ENCODE measurements at regions of chr10 and their contacts with region 1.

Region 1: GRCh38 chr10:72048450-72049124 is 39.8 kb downstream of the SPOCK2 start:
- DNase-seq: peak; percentile 95
- H3K4me3 Mint-ChIP-seq: no peak overlapping the region
- H3K27ac Mint-ChIP-seq: no peak overlapping the region
- H3K4me1 Mint-ChIP-seq: peaks cover 4% of the 10 kb centered on the region
- H3K27me3 Mint-ChIP-seq: no peaks in the 10 kb centered on the region

Region 2: GRCh38 chr10:71893920-71894319 is 154.7 kb before region 1 on chr10:
- CTCF ChIA-PET with region 1: interaction called, 126 read pairs
- POLR2A ChIA-PET with region 1: no interaction called
- intact Hi-C with region 1: loop called (anchors 1 kb)
- DNase-seq: no peak
- H3K4me3 Mint-ChIP-seq: no peak overlapping the region
- H3K27ac Mint-ChIP-seq: no peak overlapping the region
- H3K4me1 Mint-ChIP-seq: peaks cover 6% of the 10 kb centered on the region
- H3K27me3 Mint-ChIP-seq: peaks cover 16% of the 10 kb centered on the region

Region 3: GRCh38 chr10:71985542-71986250 is 62.9 kb before region 1 on chr10:
- CTCF ChIA-PET with region 1: interaction called, 28 read pairs
- POLR2A ChIA-PET with region 1: no interaction called
- intact Hi-C with region 1: no loop called
- DNase-seq: peak; percentile 47
- H3K4me3 Mint-ChIP-seq: peak overlapping the region; percentile 17
- H3K27ac Mint-ChIP-seq: peak overlapping the region; percentile 74
- H3K4me1 Mint-ChIP-seq: peaks cover 21% of the 10 kb centered on the region
- H3K27me3 Mint-ChIP-seq: peaks cover 7% of the 10 kb centered on the region

Region 4: DNA sequence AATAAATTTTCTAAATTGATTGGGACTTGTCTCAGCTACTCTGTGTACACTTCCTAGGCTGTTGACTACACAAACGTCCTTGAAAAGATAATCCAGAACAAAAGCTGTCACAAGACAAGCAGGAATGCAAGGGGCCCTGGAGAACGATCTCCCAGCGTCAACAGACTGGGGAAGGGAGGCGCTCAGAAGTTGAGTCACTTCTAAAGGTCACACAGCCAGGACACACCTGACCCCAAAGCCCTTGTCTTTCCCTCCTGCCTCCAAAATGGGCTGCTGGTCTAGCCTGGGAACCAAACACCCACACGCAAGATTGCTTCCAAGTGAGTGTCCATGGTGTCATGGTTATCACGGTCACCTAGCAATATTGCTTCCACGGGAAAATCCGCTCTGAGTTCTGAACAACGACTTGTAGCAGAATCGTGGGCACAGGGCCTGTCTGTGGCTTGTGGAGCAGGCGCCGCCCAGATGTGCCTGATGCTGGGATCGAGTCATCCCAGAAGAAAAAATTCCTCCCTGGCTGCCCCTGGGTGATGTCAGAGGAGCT is 10.1 kb before region 1 on chr10:
- CTCF ChIA-PET with region 1: interaction called, 19 read pairs
- POLR2A ChIA-PET with region 1: no interaction called
- intact Hi-C with region 1: no loop called
- DNase-seq: no peak
- H3K4me3 Mint-ChIP-seq: no peak overlapping the region
- H3K27ac Mint-ChIP-seq: no peak overlapping the region
- H3K4me1 Mint-ChIP-seq: no peaks in the 10 kb centered on the region
- H3K27me3 Mint-ChIP-seq: no peaks in the 10 kb centered on the region

Region 5: DNA sequence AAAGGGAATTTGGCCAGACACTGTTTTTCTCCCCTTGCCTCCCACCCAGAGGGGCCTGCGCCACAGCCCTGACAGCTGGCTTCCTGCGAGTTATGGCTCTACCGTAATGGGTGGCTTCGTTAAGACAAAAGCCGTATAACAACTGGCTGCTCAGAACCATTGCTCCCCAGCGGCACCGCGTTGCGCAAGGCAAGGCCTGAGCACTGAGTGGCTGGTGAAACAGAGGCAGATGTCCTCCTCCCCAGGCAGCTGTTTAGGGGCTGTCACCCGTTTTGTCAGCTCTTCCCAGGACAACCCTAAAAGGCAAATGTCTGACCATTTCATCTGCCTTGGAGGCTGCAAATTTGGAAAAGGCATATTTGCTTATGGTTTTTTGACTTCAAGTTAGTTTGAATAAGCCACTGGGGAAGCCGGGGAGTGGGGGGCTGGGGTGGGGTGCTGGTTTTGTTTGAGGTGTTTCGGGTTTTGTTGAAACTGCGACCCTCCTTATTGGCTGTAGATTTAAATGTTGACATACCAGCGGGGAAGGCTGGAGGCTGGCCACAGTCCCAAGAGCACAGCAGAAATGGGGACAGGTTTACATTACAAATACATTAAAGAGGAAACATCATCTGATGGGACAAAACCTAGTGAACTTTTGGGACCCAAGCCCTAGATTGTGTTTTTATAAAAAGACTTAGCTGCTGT is 40.4 kb after region 1 on chr10:
- CTCF ChIA-PET with region 1: interaction called, 15 read pairs
- POLR2A ChIA-PET with region 1: no interaction called
- intact Hi-C with region 1: no loop called
- DNase-seq: peak; percentile 76
- H3K4me3 Mint-ChIP-seq: peak overlapping the region; percentile 100
- H3K27ac Mint-ChIP-seq: peak overlapping the region; percentile 99
- H3K4me1 Mint-ChIP-seq: peaks cover 46% of the 10 kb centered on the region
- H3K27me3 Mint-ChIP-seq: no peaks in the 10 kb centered on the region

Region 6: GRCh38 chr10:72215652-72216549 is 167.3 kb after region 1 on chr10 and contains the starts of genes ANAPC16 and ASCC1:
- CTCF ChIA-PET with region 1: interaction called, 50 read pairs
- POLR2A ChIA-PET with region 1: no interaction called
- intact Hi-C with region 1: no loop called
- DNase-seq: peak; percentile 96
- H3K4me3 Mint-ChIP-seq: peak within 1 kb of the TSS; percentile 95
- H3K27ac Mint-ChIP-seq: peak within 1 kb of the TSS; percentile 98
- H3K4me1 Mint-ChIP-seq: peaks cover 53% of the 10 kb centered on the region
- H3K27me3 Mint-ChIP-seq: no peaks in the 10 kb centered on the region
- total RNA-seq, gene ANAPC16: 119 to 122 TPM
- total RNA-seq, gene ASCC1: 50.9 to 52.5 TPM

Region 7: GRCh38 chr10:72337020-72337629 is 288.5 kb after region 1 on chr10:
- CTCF ChIA-PET with region 1: interaction called, 71 read pairs
- POLR2A ChIA-PET with region 1: interaction called, 4 read pairs
- intact Hi-C with region 1: loop called (anchors 1 kb)
- DNase-seq: peak; percentile 79
- H3K4me3 Mint-ChIP-seq: no peak overlapping the region
- H3K27ac Mint-ChIP-seq: peak overlapping the region; percentile 99
- H3K4me1 Mint-ChIP-seq: peaks cover 61% of the 10 kb centered on the region
- H3K27me3 Mint-ChIP-seq: no peaks in the 10 kb centered on the region

Measured in activated CD4-positive, alpha-beta memory T cell treated with anti-CD3 and anti-CD28 coated beads for 36 hours (primary cell).